ENCODE measurements at regions of chr21 and their contacts with region 1.

Region 1: DNA sequence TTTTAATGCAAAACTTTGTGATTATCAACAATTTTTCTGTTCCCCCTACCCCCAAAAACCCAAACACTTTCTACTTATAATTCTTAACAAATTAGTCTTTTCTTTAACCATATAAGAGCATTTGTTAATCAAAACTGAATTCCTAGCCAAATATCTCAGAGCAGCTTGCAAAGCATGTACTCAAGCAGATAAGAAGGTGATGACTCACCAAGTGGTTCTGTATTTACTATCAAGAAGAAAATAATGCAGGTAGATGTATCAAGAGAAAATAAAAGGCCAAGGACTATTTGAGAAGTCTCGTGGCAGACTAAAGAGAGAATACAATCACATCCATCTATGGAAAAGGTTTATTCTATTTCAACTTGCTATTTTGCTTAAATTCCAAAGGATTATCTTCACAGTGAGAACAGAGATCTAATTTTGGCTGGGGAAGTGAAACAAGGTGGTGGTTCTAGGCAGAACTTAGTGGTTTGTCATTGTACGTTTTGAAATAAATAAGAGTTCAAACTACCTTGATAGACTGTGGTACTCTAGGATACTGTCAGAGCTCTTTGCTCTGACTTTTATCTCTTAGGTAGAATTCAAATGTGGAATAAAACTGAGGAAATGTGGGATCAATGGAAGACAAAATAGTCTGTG is 94.7 kb upstream of the NRIP1 start:
- DNase-seq: no peak
- ATAC-seq: peak; percentile 90
- H3K4me3 Mint-ChIP-seq: peak overlapping the region; percentile 33
- H3K27ac Mint-ChIP-seq: peak overlapping the region; percentile 63
- H3K4me1 Mint-ChIP-seq: peaks cover 23% of the 10 kb centered on the region
- H3K27me3 Mint-ChIP-seq: peaks cover 3% of the 10 kb centered on the region
- CTCF ChIP-seq: no peak

Region 2: DNA sequence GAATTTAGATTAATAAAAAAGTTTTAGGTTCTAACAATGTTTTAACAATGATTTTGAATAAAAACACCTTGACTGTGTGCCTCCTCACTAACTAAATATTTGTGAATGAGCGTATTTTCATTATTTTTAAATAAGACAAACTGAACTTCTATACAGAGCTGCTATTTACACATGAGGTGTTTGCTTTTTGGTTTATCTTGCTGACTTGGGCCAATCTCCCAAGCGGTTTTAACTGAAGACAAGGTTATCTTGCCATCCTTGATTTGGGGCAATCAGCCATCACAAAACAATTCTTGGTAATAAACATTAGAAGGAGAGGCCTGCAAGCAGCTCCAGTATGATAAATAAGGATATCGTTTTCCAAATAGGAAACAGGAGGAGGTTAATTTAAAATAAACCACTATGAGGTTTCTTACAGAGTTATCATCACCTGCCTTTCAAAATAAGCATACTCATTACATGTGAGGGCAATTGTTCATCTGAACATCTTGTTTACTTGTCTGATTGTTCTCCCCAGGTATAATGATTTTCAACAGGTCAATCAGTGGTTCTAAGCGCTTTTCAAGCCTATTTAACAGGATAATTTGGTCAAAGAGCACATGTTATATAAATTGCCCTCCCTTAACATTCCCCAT is 13.6 kb after region 1 on chr21:
- CTCF ChIA-PET with region 1: no interaction called
- POLR2A ChIA-PET with region 1: no interaction called
- intact Hi-C with region 1: no loop called
- DNase-seq: no peak
- ATAC-seq: no peak
- H3K4me3 Mint-ChIP-seq: no peak overlapping the region
- H3K27ac Mint-ChIP-seq: no peak overlapping the region
- H3K4me1 Mint-ChIP-seq: no peaks in the 10 kb centered on the region
- H3K27me3 Mint-ChIP-seq: no peaks in the 10 kb centered on the region
- CTCF ChIP-seq: no peak

Region 3: GRCh38 chr21:15206514-15206913 is 47.0 kb after region 1 on chr21:
- CTCF ChIA-PET with region 1: no interaction called
- POLR2A ChIA-PET with region 1: no interaction called
- intact Hi-C with region 1: loop called (anchors 5 kb)
- DNase-seq: no peak
- ATAC-seq: peak; percentile 76
- H3K4me3 Mint-ChIP-seq: peak overlapping the region; percentile 24
- H3K27ac Mint-ChIP-seq: peak overlapping the region; percentile 3
- H3K4me1 Mint-ChIP-seq: peaks cover 22% of the 10 kb centered on the region
- H3K27me3 Mint-ChIP-seq: peaks cover 37% of the 10 kb centered on the region
- CTCF ChIP-seq: no peak

Region 4: DNA sequence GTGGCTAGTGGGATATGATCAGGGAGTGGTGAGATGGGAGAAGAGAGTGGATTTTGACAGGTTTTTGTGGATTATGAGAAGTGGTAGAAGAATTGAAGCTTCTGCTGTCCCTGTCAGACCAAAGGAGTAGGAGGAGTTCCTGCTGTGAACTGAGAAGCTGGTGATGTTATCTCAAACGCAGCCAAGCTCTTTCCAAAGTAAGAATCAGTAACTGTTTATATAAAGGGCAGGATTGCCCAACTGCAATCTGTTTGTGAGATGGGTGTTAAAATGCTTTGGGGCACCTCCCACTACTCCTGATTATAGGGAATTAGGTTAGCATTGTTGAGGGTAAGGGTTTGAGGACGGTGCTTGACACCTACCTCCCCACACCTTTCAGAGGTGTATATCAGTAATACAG is 509.7 kb after region 1 on chr21:
- CTCF ChIA-PET with region 1: no interaction called
- POLR2A ChIA-PET with region 1: no interaction called
- intact Hi-C with region 1: no loop called
- DNase-seq: no peak
- ATAC-seq: no peak
- H3K4me3 Mint-ChIP-seq: no peak overlapping the region
- H3K27ac Mint-ChIP-seq: no peak overlapping the region
- H3K4me1 Mint-ChIP-seq: no peaks in the 10 kb centered on the region
- H3K27me3 Mint-ChIP-seq: no peaks in the 10 kb centered on the region
- CTCF ChIP-seq: no peak

Measured in activated B cell treated with CpG ODN at 0.5 μM for 24 hours (primary cell).